ENCODE measurements at regions of chr6 and their contacts with region 1.

Region 1: DNA sequence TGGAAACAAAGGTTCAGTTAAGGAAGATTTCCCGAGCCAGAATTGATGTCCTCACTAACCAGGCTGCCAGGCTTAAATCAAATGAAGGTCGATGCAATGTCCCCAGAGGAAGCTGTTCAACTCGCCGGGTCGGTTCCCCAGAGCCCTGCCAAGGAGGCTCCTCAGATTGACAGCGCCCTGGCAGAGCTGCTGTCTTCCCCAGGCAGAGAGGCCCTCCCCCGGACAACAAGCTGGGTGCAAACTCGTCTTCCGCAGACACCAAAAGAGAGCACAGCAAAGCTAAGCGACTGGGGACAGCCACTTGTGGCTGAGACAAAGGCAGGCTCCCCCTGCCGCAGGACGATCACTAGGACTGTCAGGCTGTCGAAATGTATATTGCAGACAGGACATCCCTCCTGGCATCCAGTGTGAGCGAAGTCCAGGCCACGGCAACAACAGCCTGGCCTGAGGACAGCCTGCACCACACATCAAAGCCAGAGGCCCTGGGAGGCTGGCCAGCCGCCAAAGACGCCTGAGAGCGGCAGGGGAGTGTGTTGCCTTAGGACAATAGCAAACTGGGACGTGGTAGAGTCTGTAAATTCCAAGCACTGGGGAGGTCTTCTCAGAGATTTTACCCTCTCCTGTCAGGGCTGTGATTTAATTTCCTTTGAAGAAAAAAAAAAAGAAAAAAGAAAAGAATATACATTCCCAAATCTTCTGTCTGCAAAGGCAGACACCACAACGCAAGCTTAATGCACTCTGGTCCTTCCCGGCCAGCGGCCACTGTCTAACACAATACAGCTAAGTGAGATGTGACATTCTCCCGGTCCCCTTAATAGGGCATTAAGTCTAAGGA is 99.1 kb downstream of the HIVEP2 start:
- DNase-seq: peak; percentile 35
- H3K4me3 Mint-ChIP-seq: peak overlapping the region; percentile 60
- H3K27ac Mint-ChIP-seq: peak overlapping the region; percentile 62
- H3K4me1 Mint-ChIP-seq: peaks cover 89% of the 10 kb centered on the region
- H3K27me3 Mint-ChIP-seq: no peaks in the 10 kb centered on the region

Region 2: GRCh38 chr6:142395768-142396231 is 450.0 kb before region 1 on chr6:
- intact Hi-C with region 1: loop called (anchors 10 kb)
- DNase-seq: no peak
- H3K4me3 Mint-ChIP-seq: no peak overlapping the region
- H3K27ac Mint-ChIP-seq: no peak overlapping the region
- H3K4me1 Mint-ChIP-seq: peaks cover 12% of the 10 kb centered on the region
- H3K27me3 Mint-ChIP-seq: peaks cover 61% of the 10 kb centered on the region

Region 3: GRCh38 chr6:142705054-142705453 is 140.8 kb before region 1 on chr6:
- intact Hi-C with region 1: no loop called
- DNase-seq: no peak
- H3K4me3 Mint-ChIP-seq: no peak overlapping the region
- H3K27ac Mint-ChIP-seq: no peak overlapping the region
- H3K4me1 Mint-ChIP-seq: peaks cover 3% of the 10 kb centered on the region
- H3K27me3 Mint-ChIP-seq: no peaks in the 10 kb centered on the region

Region 4: GRCh38 chr6:142802124-142802523 is 43.7 kb before region 1 on chr6:
- intact Hi-C with region 1: loop called (anchors 5 kb)
- DNase-seq: no peak
- H3K4me3 Mint-ChIP-seq: no peak overlapping the region
- H3K27ac Mint-ChIP-seq: peak overlapping the region; percentile 56
- H3K4me1 Mint-ChIP-seq: peaks cover 41% of the 10 kb centered on the region
- H3K27me3 Mint-ChIP-seq: no peaks in the 10 kb centered on the region

Region 5: GRCh38 chr6:142857233-142857761 is 11.5 kb after region 1 on chr6:
- intact Hi-C with region 1: loop called (anchors 2 kb)
- DNase-seq: no peak
- H3K4me3 Mint-ChIP-seq: peak overlapping the region; percentile 75
- H3K27ac Mint-ChIP-seq: peak overlapping the region; percentile 93
- H3K4me1 Mint-ChIP-seq: peaks cover 79% of the 10 kb centered on the region
- H3K27me3 Mint-ChIP-seq: no peaks in the 10 kb centered on the region

Region 6: GRCh38 chr6:142885182-142885867 is 39.5 kb after region 1 on chr6:
- intact Hi-C with region 1: loop called (anchors 1 kb)
- DNase-seq: peak; percentile 26
- H3K4me3 Mint-ChIP-seq: peak overlapping the region; percentile 92
- H3K27ac Mint-ChIP-seq: peak overlapping the region; percentile 99
- H3K4me1 Mint-ChIP-seq: peaks cover 65% of the 10 kb centered on the region
- H3K27me3 Mint-ChIP-seq: no peaks in the 10 kb centered on the region

Region 7: DNA sequence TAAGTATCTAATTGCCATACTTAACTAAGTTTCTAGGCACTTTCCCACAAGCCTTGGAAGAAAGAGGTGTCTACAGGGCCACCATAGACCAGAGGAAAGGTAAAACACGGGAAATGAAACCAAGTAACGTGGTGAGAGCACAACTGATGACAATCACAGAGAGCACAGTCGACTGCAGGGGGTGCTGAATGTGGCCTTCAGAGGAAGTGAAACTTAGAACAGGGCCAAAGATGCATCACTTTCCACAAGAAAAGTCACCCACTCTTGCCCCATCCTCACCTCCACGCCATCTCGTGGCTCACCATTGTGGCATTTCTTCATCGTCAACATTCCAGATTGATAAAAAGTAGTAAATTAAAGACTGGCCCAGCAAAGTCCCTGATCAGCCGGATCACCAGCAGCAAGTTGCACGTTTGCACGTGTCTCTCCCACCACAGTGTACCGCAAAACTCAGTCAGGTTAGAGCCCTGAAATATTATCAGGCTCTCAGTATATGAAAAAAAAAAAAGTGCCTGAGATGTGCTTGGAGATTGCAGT is 67.7 kb after region 1 on chr6:
- intact Hi-C with region 1: loop called (anchors 1 kb)
- DNase-seq: peak; percentile 75
- H3K4me3 Mint-ChIP-seq: peak overlapping the region; percentile 48
- H3K27ac Mint-ChIP-seq: peak overlapping the region; percentile 87
- H3K4me1 Mint-ChIP-seq: peaks cover 67% of the 10 kb centered on the region
- H3K27me3 Mint-ChIP-seq: no peaks in the 10 kb centered on the region

Region 8: GRCh38 chr6:142985281-142985680 is 139.4 kb after region 1 on chr6:
- intact Hi-C with region 1: no loop called
- DNase-seq: no peak
- H3K4me3 Mint-ChIP-seq: no peak overlapping the region
- H3K27ac Mint-ChIP-seq: no peak overlapping the region
- H3K4me1 Mint-ChIP-seq: no peaks in the 10 kb centered on the region
- H3K27me3 Mint-ChIP-seq: no peaks in the 10 kb centered on the region